CD8-positive, alpha-beta T cell (primary cell): ENCODE measurements at regions of chr2 and their contacts with region 1.

Region 1: GRCh38 chr2:21317131-21317530 is 193.4 kb downstream of the TDRD15 start:
- DNase-seq: peak in 3 of 9 experiments; percentile 6 to 22 (median 7)
- ATAC-seq: no peak
- H3K4me3 ChIP-seq: no peak overlapping the region
- H3K4me3 Mint-ChIP-seq: no peak overlapping the region
- H3K27ac ChIP-seq: no peak overlapping the region
- H3K27ac Mint-ChIP-seq: no peak overlapping the region
- H3K4me1 ChIP-seq: no peaks in the 10 kb centered on the region
- H3K4me1 Mint-ChIP-seq: no peaks in the 10 kb centered on the region
- H3K27me3 ChIP-seq: no peaks in the 10 kb centered on the region
- H3K27me3 Mint-ChIP-seq: peaks cover 5% of the 10 kb centered on the region
- CTCF ChIP-seq: peak; percentile 21

Region 2: GRCh38 chr2:21042958-21043743 is 274.0 kb before region 1 on chr2:
- CTCF ChIA-PET with region 1: interaction called, 4 read pairs
- POLR2A ChIA-PET with region 1: no interaction called
- intact Hi-C with region 1: loop called (anchors 2 to 5 kb)
- DNase-seq: peak; percentile 32 to 68 (median 57)
- ATAC-seq: peak; percentile 63
- H3K4me3 ChIP-seq: no peak overlapping the region
- H3K4me3 Mint-ChIP-seq: peak overlapping the region; percentile 29
- H3K27ac ChIP-seq: no peak overlapping the region
- H3K27ac Mint-ChIP-seq: no peak overlapping the region
- H3K4me1 ChIP-seq: peaks cover 5% of the 10 kb centered on the region
- H3K4me1 Mint-ChIP-seq: peaks cover 7% of the 10 kb centered on the region
- H3K27me3 ChIP-seq: peaks cover 0 to 4% of the 10 kb centered on the region in 2 experiments
- H3K27me3 Mint-ChIP-seq: peaks cover 35% of the 10 kb centered on the region
- CTCF ChIP-seq: peak; percentile 99